HepG2 (cell line): ENCODE measurements at regions of chr2 and their contacts with region 1.

Region 1: GRCh38 chr2:6103949-6104348 is 411.8 kb downstream of the SOX11 start:
- DNase-seq: no peak
- ATAC-seq: no peak; the same call in 2 of the 3 replicates
- H3K4me3 ChIP-seq: no peak overlapping the region
- H3K27ac ChIP-seq: no peak overlapping the region
- H3K4me1 ChIP-seq: no peaks in the 10 kb centered on the region
- H3K27me3 ChIP-seq: no peaks in the 10 kb centered on the region
- CTCF ChIP-seq: no peak
- EP300 ChIP-seq: no peak
- POLR2A ChIP-seq: no peak
- RAD21 ChIP-seq: no peak

Region 2: DNA sequence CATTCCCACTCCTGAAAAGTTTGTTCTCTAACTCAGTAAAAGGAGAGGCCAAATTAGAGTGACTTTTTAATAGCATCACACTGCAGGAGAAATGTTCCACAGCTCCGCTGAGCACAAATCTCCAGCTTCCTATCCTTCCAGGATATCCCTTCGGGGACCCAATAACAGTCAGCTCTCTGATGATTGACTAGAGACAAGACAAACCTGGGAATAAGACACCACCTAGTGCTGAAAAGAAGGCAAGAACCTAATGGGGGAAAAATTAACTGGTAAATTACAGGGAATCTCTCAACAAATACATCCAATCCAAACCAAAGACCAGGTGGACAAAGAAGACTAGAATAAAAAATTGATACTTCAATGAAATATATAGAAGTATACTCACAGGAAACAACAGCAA is 1388.9 kb before region 1 on chr2:
- CTCF ChIA-PET with region 1: no interaction called
- POLR2A ChIA-PET with region 1: no interaction called
- in situ Hi-C with region 1: no loop called
- intact Hi-C with region 1: loop called (anchors 10 kb)
- DNase-seq: no peak
- ATAC-seq: no peak
- H3K4me3 ChIP-seq: no peak overlapping the region
- H3K27ac ChIP-seq: no peak overlapping the region
- H3K4me1 ChIP-seq: no peaks in the 10 kb centered on the region
- H3K27me3 ChIP-seq: no peaks in the 10 kb centered on the region
- CTCF ChIP-seq: no peak
- EP300 ChIP-seq: no peak
- POLR2A ChIP-seq: no peak
- RAD21 ChIP-seq: no peak

Region 3: DNA sequence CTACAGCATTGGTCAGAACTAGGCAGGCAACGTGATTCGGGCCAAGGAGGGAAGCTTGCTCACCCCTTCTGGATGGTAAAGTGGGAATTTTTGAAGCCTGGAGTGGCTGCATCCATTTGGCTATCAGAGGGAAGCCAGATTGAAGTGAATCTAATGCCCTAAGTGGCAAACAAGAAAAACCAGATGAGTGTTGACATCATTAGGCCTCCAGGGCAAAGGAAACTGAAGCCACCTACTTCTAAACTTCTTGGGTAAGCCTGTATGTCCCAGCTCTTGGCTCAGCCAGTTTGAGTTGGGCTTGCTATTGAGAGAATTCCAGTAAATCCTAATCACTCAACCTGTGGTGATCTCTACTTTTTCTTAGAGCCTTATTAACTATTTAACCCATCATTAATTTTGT is 390.9 kb before region 1 on chr2:
- CTCF ChIA-PET with region 1: no interaction called
- POLR2A ChIA-PET with region 1: no interaction called
- in situ Hi-C with region 1: no loop called
- intact Hi-C with region 1: no loop called
- DNase-seq: no peak
- ATAC-seq: no peak
- H3K4me3 ChIP-seq: no peak overlapping the region
- H3K27ac ChIP-seq: no peak overlapping the region
- H3K4me1 ChIP-seq: no peaks in the 10 kb centered on the region
- H3K27me3 ChIP-seq: no peaks in the 10 kb centered on the region
- CTCF ChIP-seq: no peak
- EP300 ChIP-seq: no peak
- POLR2A ChIP-seq: no peak
- RAD21 ChIP-seq: no peak

Region 4: DNA sequence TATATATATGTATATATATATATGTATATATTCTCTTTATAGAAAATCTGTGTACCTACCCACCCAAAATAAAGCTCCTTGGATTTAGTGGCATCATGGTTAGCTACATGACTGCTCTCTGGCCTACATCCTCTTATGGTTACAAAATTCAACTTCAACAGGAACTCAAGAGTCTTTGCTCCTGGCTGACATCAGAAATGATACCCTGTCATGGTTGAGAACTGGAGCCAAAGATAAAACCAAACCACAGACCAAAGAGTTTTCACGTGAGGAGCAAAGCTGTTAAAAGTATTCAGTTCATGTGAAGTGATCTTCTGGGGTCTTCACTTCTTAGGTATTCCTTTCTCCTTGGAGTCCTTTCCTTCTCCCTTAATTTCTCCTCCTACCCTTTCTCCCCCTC is 64.5 kb after region 1 on chr2:
- CTCF ChIA-PET with region 1: no interaction called
- POLR2A ChIA-PET with region 1: no interaction called
- in situ Hi-C with region 1: no loop called
- intact Hi-C with region 1: no loop called
- DNase-seq: no peak
- ATAC-seq: no peak
- H3K4me3 ChIP-seq: no peak overlapping the region
- H3K27ac ChIP-seq: no peak overlapping the region
- H3K4me1 ChIP-seq: no peaks in the 10 kb centered on the region
- H3K27me3 ChIP-seq: no peaks in the 10 kb centered on the region
- CTCF ChIP-seq: no peak
- EP300 ChIP-seq: no peak
- POLR2A ChIP-seq: no peak
- RAD21 ChIP-seq: no peak